AG04450 (cell line): ENCODE measurements at regions of chr12 and their contacts with region 1.

Region 1: GRCh38 chr12:109428037-109428629 is 49.0 kb downstream of the KCTD10 start:
- DNase-seq: peak; percentile 59
- H3K4me3 ChIP-seq: no peak overlapping the region
- H3K27ac ChIP-seq: no peak overlapping the region
- H3K27me3 ChIP-seq: peaks cover 5% of the 10 kb centered on the region
- CTCF ChIP-seq: peak; percentile 99

Region 2: GRCh38 chr12:109440851-109441493 is 12.8 kb after region 1 on chr12:
- CTCF ChIA-PET with region 1: interaction called, 21 read pairs
- POLR2A ChIA-PET with region 1: no interaction called
- DNase-seq: no peak
- H3K4me3 ChIP-seq: no peak overlapping the region
- H3K27ac ChIP-seq: no peak overlapping the region
- H3K27me3 ChIP-seq: no peaks in the 10 kb centered on the region
- CTCF ChIP-seq: no peak

Region 3: DNA sequence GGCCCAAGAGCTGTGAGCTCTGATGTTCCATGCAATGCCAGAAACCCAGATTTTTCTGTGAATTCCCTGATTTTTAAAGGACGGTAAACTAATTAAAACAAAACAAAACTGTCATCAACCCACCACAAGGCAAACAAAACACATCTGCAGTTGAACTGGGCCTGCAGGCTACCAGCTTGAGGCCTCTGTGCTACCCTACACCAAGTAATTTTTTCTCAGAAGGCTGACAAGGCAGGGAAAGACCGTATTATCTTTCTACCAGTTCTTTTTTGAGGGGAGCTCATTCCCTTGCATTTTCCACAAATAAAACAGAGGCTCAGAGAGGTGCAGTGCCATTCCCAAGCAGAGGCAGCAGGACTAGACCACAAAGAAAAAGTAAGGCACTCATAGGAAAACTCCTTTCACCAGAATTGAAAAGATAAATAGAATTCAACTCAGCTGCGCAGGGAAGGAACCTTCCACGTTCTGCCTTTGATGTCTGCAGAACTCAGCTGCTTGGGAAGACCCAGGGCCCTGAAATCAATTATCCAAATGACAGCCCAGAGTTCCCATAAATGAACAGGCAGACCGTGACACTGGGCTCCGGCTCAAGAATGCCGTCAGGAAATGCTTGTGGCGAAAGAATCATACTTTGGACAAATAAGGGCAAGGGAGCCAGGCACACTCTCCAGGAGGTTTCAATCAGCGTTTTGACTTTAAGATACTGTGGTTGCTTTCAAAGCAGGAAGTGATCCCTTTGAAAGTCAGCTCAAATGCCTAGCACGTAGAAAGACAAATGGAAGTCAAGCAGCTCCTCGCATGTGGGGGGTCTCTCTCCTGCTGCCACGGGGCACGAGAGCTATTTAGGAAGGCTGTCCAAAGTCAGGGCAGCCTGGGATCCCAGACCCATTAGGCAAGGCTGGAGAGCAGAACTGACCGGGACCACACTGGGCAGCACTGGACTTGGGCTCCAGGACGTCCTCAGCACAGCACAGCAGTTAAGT is 34.9 kb after region 1 on chr12:
- CTCF ChIA-PET with region 1: interaction called, 11 read pairs
- POLR2A ChIA-PET with region 1: interaction called, 6 read pairs
- DNase-seq: peak; percentile 98
- H3K4me3 ChIP-seq: peak overlapping the region; percentile 48
- H3K27ac ChIP-seq: peak overlapping the region; percentile 98
- H3K27me3 ChIP-seq: no peaks in the 10 kb centered on the region
- CTCF ChIP-seq: 0 out of 2 replicates have a peak, but pooled peaks have one; percentile 1

Region 4: DNA sequence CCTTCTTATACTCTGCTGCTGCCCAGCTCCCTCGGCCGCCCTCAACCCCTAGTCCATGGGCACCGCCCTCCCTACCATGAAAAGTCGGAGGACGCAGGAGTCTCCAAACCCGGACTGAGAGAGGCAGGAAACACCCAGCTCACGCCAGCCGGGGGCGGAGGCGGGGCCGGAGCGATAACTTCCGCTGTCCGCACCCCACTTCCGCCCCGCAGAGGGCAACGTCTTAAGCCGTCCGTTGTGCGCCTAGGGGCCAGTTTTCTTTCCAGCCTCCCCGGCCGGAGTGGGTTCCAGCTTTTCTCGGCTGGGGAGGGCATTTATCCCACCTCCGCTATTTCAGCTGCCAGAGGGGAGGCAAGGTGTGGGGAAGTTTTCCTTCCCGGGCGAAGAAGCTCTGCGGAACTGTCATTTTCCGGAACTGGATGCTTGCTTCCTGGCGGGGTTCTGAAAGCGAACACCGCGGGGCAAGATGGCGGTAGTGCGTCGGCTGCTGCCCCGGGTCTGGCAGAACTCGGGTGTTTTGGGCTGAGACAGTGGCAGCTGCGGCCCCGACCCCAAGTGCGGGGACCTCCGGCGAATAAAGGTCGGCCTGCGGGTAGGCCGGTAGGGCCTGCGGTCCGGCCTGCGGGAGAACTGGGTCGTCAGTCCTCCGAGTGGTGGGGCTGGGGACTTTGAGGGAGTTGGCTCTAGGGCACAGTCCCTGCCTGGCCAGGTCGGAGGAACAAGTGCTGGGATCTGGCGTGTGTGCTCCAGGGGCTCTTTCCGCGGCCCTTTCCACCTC is 49.2 kb after region 1 on chr12 and contains the starts of genes KCTD10 and UBE3B:
- CTCF ChIA-PET with region 1: interaction called, 38 read pairs
- POLR2A ChIA-PET with region 1: no interaction called
- DNase-seq: peak; percentile 78
- H3K4me3 ChIP-seq: peak within 1 kb of the TSS; percentile 97
- H3K27ac ChIP-seq: peak within 1 kb of the TSS; percentile 98
- H3K27me3 ChIP-seq: no peaks in the 10 kb centered on the region
- CTCF ChIP-seq: no peak
- polyA plus RNA-seq, gene KCTD10: 119 and 128 TPM in 2 replicates
- polyA plus RNA-seq, gene UBE3B: 40.5 and 42.8 TPM in 2 replicates

Region 5: GRCh38 chr12:109494348-109494881 is 66.3 kb after region 1 on chr12:
- CTCF ChIA-PET with region 1: interaction called, 13 read pairs
- POLR2A ChIA-PET with region 1: no interaction called
- DNase-seq: no peak
- H3K4me3 ChIP-seq: no peak overlapping the region
- H3K27ac ChIP-seq: no peak overlapping the region
- H3K27me3 ChIP-seq: no peaks in the 10 kb centered on the region
- CTCF ChIP-seq: no peak

Region 6: DNA sequence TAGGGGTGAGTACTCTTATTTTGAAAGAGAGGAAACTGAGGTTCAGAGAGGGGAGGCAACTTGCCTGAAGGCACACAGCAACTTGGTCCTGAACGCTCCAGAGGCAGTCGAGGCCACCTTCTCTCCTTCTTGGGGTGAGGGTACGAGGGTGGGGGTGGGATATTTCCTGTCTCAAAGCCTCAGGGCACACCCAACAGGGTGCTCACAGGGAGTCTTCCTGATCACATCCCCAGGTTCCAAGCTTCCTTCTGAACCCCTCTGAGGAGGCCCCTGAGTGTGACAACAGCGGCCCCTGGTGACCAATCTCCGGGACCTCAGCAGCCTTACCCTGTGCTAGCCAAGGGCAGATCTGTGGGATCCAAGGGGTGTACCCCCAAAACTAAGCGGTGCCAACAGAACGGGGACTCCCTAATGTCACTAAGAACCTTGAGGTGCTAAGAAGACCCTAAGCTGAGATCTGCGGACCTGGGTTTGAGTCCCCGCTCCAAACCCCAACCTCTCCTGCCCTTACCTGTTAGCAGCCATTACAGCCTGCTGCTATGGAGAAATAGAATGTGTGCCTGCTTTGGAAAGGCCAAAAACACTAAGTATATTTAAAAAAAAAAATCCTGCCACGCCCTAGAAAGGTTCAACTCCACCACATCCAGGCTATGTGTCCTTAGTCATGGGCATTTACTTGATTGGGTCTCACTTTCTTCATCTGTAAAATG is 347.2 kb after region 1 on chr12:
- CTCF ChIA-PET with region 1: interaction called, 25 read pairs
- POLR2A ChIA-PET with region 1: no interaction called
- DNase-seq: peak; percentile 30
- H3K4me3 ChIP-seq: no peak overlapping the region
- H3K27ac ChIP-seq: no peak overlapping the region
- H3K27me3 ChIP-seq: peaks cover 6% of the 10 kb centered on the region
- CTCF ChIP-seq: peak; percentile 96